Activated naive CD4-positive, alpha-beta T cell treated with anti-CD3 and anti-CD28 coated beads, Interleukin-2, amount 10 ng/mL, durations not matched to agents 7 days and 5 days (primary cell): ENCODE measurements at regions of chr10 and their contacts with region 1.

Region 1: DNA sequence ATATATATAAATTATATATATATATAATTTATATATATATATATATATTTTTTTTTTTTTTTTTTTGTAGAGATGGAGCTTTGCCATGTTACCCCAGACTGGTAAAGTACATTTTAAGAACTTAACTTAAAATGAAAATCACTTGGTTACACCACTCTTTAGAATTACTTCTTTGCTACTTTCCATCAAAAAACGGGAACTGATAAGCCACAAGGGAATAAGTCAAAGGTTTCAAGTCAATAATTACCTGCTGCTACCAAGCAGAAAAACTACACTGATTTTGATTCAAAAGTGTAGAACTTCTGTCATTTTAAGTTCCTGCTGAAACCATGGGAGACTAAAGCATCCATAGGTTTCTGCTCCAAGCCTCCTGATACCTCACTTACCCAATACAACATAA is 12.2 kb downstream of the PPA1 start:
- DNase-seq: no peak
- H3K4me3 Mint-ChIP-seq: no peak overlapping the region
- H3K27ac Mint-ChIP-seq: peak overlapping the region; percentile 80
- H3K4me1 Mint-ChIP-seq: peaks cover 16% of the 10 kb centered on the region
- H3K27me3 Mint-ChIP-seq: no peaks in the 10 kb centered on the region

Region 2: DNA sequence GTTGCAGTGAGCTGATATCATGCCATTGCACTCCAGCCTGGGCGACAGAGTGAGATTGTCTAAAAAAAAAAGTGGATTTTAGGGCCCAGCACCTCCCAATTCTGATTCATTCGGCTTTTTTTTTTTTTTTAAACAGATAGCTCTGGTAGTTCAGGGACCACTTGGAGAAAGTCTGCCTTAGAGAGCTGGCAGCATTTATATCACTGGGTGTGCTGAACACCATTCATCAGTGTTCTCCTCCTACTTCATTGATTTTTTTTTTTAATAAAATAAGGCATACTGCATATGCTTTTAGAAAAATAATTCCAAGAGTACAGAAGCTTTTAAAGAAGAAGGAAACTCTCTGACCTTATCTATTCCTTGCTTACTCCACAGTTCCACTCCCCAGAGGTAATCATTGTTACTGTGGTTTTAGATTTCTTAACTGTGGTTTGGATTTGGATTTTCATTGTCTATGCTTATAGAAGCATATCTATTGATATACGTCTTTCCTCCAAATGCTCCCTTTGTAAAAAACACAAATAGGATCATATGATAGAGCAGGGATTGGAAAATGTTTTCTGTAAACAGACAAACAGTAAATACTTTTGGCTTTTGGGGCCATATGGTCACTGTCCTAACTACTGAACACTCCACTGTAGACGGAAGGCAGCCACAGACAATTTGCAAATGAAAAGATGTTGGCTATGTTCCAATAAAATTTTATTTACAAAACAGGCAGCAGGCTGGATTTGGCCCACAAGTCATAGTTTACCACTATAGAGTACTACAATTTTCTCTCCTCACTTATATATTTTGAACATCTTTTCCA is 29.7 kb before region 1 on chr10:
- CTCF ChIA-PET with region 1: no interaction called
- DNase-seq: no peak
- H3K4me3 Mint-ChIP-seq: no peak overlapping the region
- H3K27ac Mint-ChIP-seq: no peak overlapping the region
- H3K4me1 Mint-ChIP-seq: no peaks in the 10 kb centered on the region
- H3K27me3 Mint-ChIP-seq: no peaks in the 10 kb centered on the region

Region 3: DNA sequence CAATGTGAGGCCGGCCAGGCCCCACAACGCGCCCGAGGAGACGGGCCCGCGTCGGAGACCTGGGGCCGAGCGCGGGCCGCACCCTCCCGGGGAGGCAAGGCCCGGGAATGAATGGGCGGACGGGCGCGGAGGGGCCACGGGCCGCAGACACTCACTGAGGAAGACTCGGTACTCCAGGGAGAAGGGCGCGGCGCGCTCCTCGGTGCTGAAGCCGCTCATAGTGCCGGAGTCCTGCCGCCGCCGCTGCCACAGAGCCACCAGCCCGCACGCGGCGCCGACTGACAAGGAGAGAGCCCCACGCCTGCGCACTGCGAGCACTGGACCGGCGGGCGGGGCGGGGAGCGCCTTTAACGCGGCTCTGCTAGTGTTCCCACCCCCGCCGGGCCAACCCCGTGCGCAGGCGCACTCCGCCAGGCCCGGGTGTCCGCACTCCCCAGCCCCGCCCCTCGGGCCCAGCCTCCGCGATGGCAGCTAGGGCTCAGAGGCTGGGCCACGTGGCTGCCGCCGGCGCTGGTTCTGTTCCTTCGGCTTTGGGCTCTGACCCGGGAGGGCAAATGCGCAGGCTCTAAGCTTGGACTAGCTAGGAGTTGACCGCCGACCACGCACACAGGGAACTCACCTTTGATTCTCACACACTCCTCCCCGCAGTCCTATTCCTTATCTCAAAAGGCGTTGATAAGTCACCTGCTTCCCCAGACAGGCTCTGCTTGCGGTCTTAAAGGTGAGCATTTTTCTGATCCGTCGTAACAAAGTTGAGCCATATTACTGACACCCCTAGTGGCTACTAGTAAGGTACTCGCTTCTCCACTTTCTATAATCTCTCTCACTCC is 12.3 kb after region 1 on chr10 and contains the start of gene PPA1:
- CTCF ChIA-PET with region 1: interaction called, 30 read pairs
- DNase-seq: peak; percentile 99
- H3K4me3 Mint-ChIP-seq: peak within 1 kb of the TSS; percentile 73
- H3K27ac Mint-ChIP-seq: peak within 1 kb of the TSS; percentile 85
- H3K4me1 Mint-ChIP-seq: peaks cover 44% of the 10 kb centered on the region
- H3K27me3 Mint-ChIP-seq: no peaks in the 10 kb centered on the region

Region 4: DNA sequence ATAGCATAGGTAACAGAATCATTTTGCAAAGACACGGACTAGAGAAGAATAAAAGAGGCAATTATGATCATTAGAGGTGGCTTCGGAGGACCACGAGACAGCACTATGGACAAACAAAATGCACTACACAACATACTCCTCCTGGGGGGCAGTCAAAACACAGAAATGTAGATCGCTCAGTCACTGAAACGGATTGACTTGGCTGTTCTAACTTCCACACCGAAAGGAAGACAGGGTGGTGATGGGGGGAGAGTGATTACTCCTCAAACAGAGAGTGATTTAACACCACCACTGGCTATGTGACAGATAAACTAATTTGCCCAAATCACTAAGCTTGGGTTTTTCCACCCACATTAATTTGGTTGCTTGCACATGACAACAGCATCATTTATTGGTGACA is 26.3 kb after region 1 on chr10:
- CTCF ChIA-PET with region 1: no interaction called
- DNase-seq: no peak
- H3K4me3 Mint-ChIP-seq: no peak overlapping the region
- H3K27ac Mint-ChIP-seq: no peak overlapping the region
- H3K4me1 Mint-ChIP-seq: no peaks in the 10 kb centered on the region
- H3K27me3 Mint-ChIP-seq: peaks cover 52% of the 10 kb centered on the region

Region 5: GRCh38 chr10:70267161-70267933 is 46.3 kb after region 1 on chr10:
- CTCF ChIA-PET with region 1: interaction called, 12 read pairs
- DNase-seq: no peak
- H3K4me3 Mint-ChIP-seq: no peak overlapping the region
- H3K27ac Mint-ChIP-seq: no peak overlapping the region
- H3K4me1 Mint-ChIP-seq: peaks cover 17% of the 10 kb centered on the region
- H3K27me3 Mint-ChIP-seq: peaks cover 17% of the 10 kb centered on the region

Region 6: DNA sequence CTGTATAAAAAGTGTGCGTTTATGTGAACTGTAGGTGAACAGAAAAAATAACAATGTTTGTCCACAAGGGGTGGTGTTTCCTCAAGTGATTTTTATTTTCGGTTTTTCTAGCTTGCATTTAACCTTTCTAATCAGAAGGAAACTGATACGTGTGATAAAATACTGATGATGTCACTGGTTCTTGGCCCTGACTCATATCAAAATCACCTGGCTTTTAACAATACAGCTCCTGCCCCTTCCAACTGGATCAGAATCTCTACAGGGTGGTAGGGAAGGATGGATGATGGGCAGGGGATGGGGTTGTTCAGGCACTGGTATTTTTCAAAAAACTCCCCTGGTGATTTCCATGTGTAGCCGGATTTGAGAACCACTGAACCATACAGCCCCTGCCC is 51.9 kb after region 1 on chr10:
- CTCF ChIA-PET with region 1: interaction called, 12 read pairs
- DNase-seq: no peak
- H3K4me3 Mint-ChIP-seq: no peak overlapping the region
- H3K27ac Mint-ChIP-seq: no peak overlapping the region
- H3K4me1 Mint-ChIP-seq: peaks cover 23% of the 10 kb centered on the region
- H3K27me3 Mint-ChIP-seq: peaks cover 13% of the 10 kb centered on the region

Region 7: GRCh38 chr10:70348228-70348850 is 127.3 kb after region 1 on chr10:
- CTCF ChIA-PET with region 1: interaction called, 13 read pairs
- DNase-seq: peak; percentile 39
- H3K4me3 Mint-ChIP-seq: no peak overlapping the region
- H3K27ac Mint-ChIP-seq: no peak overlapping the region
- H3K4me1 Mint-ChIP-seq: no peaks in the 10 kb centered on the region
- H3K27me3 Mint-ChIP-seq: no peaks in the 10 kb centered on the region

Region 8: DNA sequence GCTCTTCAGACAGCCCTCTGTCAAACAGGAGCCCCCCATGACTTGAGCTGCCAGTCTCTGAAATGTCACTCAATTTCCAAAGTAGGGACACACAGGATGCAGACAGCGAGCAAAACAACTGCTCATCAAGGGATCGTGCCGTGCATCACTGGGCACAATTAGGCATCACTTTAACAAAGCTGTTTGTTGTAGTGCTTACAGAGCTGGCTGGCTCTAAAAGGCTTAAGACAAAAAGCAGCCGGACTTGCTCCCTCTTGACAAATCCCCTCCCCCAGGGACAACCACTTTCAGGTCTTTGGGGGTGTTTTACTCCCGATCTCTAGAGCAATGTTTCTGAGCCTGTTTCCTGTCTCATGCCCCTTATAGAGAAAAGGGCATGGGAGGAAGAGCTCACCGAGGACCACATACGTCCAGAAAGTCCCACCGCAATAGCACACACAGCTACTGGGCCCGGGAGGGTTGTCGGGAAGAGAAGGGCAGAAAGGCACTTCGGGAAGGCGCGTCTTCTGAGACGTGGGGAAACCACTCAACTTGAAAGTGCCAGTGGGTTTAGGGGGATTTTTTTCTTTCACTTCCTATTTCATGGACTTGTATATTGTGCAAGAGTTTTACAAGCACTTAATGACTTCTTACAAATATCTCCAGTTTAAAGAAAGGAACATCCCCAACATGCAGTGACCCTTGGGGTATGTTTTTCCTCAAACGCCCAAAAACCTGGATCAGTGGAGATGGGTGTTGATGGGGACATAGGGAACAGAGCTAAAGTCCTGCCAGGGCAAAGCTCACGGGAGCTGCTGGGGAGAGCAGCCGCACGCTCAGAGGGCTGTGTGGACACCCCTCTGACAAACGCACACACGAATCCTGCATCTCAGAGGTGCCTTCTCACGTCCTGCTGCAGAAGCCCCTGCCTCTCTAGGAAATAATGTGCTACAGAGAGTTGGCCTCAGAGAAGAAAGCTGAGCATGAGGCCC is 134.3 kb after region 1 on chr10:
- CTCF ChIA-PET with region 1: interaction called, 284 read pairs
- DNase-seq: no peak
- H3K4me3 Mint-ChIP-seq: no peak overlapping the region
- H3K27ac Mint-ChIP-seq: peak overlapping the region; percentile 53
- H3K4me1 Mint-ChIP-seq: peaks cover 11% of the 10 kb centered on the region
- H3K27me3 Mint-ChIP-seq: no peaks in the 10 kb centered on the region